AG04449 (cell line): ENCODE measurements at regions of chr14 and their contacts with region 1.

Region 1: GRCh38 chr14:33792720-33793368 is 158.0 kb downstream of the EGLN3 start:
- DNase-seq: peak; percentile 19
- H3K4me3 ChIP-seq: no peak overlapping the region
- CTCF ChIP-seq: peak; percentile 93

Region 2: GRCh38 chr14:32576088-32576795 is 1216.6 kb before region 1 on chr14:
- CTCF ChIA-PET with region 1: interaction called, 18 read pairs
- POLR2A ChIA-PET with region 1: no interaction called
- DNase-seq: no peak
- H3K4me3 ChIP-seq: no peak overlapping the region
- CTCF ChIP-seq: peak; percentile 88

Region 3: DNA sequence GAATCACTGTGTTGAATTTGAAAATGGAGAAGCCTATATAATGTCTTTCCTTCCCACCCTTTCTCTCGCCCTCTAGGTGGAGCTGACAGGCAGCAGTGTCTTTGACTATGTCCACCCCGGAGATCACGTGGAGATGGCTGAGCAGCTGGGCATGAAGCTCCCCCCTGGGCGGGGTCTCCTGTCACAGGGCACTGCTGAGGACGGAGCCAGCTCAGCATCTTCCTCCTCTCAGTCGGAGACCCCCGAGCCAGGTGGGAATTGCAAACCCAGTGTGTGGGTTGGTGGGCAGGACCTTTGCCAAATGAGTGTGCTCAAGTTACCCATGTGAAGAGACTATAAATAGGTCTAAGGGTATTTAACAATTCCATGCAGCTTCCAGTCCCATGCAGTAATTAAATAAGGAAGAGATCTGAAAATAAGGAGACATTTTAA is 116.7 kb before region 1 on chr14:
- CTCF ChIA-PET with region 1: interaction called, 28 read pairs
- POLR2A ChIA-PET with region 1: no interaction called
- DNase-seq: no peak
- H3K4me3 ChIP-seq: no peak overlapping the region
- CTCF ChIP-seq: peak; percentile 58

Region 4: GRCh38 chr14:33774723-33775470 is 17.9 kb before region 1 on chr14:
- CTCF ChIA-PET with region 1: interaction called, 17 read pairs
- POLR2A ChIA-PET with region 1: no interaction called
- DNase-seq: no peak
- H3K4me3 ChIP-seq: no peak overlapping the region
- CTCF ChIP-seq: no peak

Region 5: GRCh38 chr14:33805593-33805992 is 12.7 kb after region 1 on chr14:
- CTCF ChIA-PET with region 1: interaction called, 35 read pairs
- POLR2A ChIA-PET with region 1: no interaction called
- DNase-seq: no peak
- H3K4me3 ChIP-seq: no peak overlapping the region
- CTCF ChIP-seq: no peak